Right cardiac atrium (tissue), 5 donors: ENCODE measurements at regions of chr9 and their contacts with region 1.

Region 1: DNA sequence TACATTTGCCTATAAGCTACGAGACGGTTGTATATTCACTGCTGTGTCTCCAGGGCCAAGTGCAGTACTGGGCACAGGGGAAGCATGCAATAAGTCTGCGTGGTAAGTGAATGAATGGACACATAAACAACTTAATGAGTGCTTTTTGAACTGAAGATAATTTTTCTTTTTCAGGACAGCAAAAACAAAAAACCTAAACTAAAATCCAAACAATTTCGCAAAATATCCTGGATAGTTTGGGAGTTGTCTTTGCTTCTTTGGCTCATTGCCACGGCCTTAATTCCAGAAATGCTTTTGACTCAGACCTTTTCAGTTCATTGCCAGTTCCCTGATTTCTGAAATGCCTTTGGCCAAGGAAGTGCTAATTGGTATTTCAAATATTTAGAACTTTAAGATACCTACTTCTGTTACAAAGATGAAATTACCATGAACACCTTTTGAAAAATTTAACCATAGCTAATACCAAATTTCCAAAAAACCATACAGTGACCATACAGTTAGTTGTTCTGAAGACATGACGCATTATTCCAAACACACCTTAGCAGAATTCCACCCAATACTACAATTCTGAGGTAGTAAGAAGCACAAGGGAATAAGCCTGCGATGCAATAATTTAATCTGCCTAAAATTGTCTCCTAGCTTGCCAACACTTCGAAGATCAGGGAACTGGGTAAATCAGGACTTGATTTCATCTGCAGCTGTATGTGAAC is 42.8 kb downstream of the TEK start:
- DNase-seq: no peak
- ATAC-seq: peak in 1 of 2 donors; percentile 55
- H3K4me3 ChIP-seq: no peak overlapping the region
- H3K27ac ChIP-seq: no peak overlapping the region
- H3K4me1 ChIP-seq: peaks cover 8% of the 10 kb centered on the region
- H3K27me3 ChIP-seq: no peaks in the 10 kb centered on the region

Region 2: DNA sequence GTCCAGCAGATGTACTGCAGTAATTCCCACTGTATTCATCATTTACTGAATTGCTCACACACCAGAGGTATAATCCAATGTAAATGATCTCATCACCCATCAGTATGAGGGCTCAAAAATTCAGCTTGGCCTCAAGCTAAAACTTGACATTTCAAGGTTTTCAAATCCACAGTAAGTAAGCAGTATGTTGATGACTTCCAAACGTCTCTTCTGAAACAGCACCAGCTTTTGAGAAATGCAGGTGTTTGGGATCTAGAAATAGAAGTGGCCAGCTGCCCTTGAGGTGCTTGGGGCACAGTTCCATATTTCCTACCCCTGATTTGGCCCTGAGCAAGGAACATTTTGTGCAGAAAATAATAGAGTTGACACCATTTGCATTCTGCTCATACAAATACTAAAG is 1085.6 kb before region 1 on chr9:
- intact Hi-C with region 1: no loop called
- DNase-seq: no peak
- ATAC-seq: no peak
- H3K4me3 ChIP-seq: no peak overlapping the region
- H3K27ac ChIP-seq: no peak overlapping the region
- H3K4me1 ChIP-seq: no peaks in the 10 kb centered on the region
- H3K27me3 ChIP-seq: no peaks in the 10 kb centered on the region

Region 3: GRCh38 chr9:27094640-27095298 is 57.1 kb before region 1 on chr9:
- intact Hi-C with region 1: no loop called
- DNase-seq: no peak
- ATAC-seq: peak in 1 of 2 donors; percentile 91
- H3K4me3 ChIP-seq: no peak overlapping the region
- H3K27ac ChIP-seq: no peak overlapping the region
- H3K4me1 ChIP-seq: no peaks in the 10 kb centered on the region
- H3K27me3 ChIP-seq: no peaks in the 10 kb centered on the region

Region 4: DNA sequence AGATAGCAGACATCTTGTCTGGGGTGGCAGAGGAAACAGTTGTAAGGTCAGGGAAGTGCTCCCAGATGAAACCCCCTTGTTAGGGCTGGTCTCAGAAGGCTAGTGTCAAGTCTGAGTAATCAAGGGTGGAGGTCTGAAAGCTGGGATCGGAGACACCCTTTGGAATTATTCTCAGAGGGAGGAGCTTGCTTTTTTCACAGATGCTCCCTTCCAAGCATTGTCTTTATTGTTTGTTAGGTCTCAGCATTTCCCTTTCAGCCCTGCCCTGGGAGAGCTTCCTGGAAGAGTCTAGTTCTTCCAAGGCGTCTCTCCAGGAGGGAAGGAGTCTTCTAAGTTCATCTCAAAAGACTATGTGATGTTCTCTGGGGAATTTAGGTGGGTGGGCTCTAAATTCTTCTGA is 39.6 kb before region 1 on chr9:
- intact Hi-C with region 1: loop called in 1 of 4 experiments (anchors 2 kb)
- DNase-seq: no peak
- ATAC-seq: peak; percentile 60 to 91
- H3K4me3 ChIP-seq: peak overlapping the region; percentile 25
- H3K27ac ChIP-seq: peak overlapping the region; percentile 64
- H3K4me1 ChIP-seq: peaks cover 1% of the 10 kb centered on the region
- H3K27me3 ChIP-seq: no peaks in the 10 kb centered on the region

Region 5: DNA sequence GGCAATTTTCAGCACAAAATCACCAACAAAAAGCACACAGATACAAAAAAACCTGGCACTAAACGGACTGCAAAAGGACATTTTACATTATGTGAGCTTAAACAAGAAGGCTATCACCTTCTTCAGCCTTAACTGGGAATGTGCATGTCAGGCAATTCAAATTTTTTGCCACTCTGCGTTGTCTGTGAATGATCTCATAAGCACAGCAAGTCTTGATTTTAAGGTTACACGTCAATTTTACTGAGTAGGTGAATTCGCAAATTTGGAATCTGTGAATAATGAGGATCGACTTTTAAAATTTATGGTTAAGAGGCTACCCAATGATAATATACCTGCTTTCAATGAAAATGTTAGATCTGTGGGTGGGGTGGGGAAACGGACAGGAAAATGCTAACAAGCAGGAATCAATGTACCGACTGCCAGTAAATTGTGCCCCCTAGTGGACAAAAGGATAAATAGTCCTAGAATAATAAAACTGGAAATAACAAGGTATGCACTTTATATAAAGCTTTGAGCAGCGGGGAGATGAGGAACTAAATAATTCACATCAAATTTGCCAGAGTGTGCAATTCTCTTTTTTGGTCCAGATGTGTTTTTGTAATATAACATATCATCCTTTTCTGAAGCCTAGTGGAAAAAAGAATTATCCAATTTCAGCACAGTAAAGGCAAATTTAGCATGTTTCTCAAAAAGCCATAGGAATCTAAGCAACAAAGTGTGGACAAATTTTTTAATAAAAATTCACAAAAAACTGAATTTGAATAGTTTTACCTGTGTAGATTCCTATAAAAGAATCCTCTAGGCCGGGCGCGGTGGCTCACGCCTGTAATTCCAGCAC is 124.6 kb after region 1 on chr9:
- intact Hi-C with region 1: no loop called
- DNase-seq: no peak
- ATAC-seq: peak in 1 of 2 donors; percentile 57
- H3K4me3 ChIP-seq: no peak overlapping the region
- H3K27ac ChIP-seq: no peak overlapping the region
- H3K4me1 ChIP-seq: no peaks in the 10 kb centered on the region
- H3K27me3 ChIP-seq: no peaks in the 10 kb centered on the region

Region 6: GRCh38 chr9:27505744-27506161 is 353.9 kb after region 1 on chr9:
- intact Hi-C with region 1: no loop called
- DNase-seq: no peak
- ATAC-seq: no peak
- H3K4me3 ChIP-seq: no peak overlapping the region
- H3K27ac ChIP-seq: no peak overlapping the region
- H3K4me1 ChIP-seq: no peaks in the 10 kb centered on the region
- H3K27me3 ChIP-seq: no peaks in the 10 kb centered on the region